Activated B cell treated with CpG ODN at 0.5 μM for 24 hours (primary cell): ENCODE measurements at regions of chr11 and their contacts with region 1.

Region 1: GRCh38 chr11:46845740-46846509 is at the start of gene CKAP5:
- DNase-seq: peak; percentile 77
- ATAC-seq: peak; percentile 88
- H3K4me3 Mint-ChIP-seq: peak within 1 kb of the TSS; percentile 96
- H3K27ac Mint-ChIP-seq: peak within 1 kb of the TSS; percentile 88
- H3K4me1 Mint-ChIP-seq: peaks cover 33% of the 10 kb centered on the region
- H3K27me3 Mint-ChIP-seq: no peaks in the 10 kb centered on the region
- CTCF ChIP-seq: no peak
- total RNA-seq, gene CKAP5: 50.4 and 52.9 TPM in 2 replicates

Region 2: DNA sequence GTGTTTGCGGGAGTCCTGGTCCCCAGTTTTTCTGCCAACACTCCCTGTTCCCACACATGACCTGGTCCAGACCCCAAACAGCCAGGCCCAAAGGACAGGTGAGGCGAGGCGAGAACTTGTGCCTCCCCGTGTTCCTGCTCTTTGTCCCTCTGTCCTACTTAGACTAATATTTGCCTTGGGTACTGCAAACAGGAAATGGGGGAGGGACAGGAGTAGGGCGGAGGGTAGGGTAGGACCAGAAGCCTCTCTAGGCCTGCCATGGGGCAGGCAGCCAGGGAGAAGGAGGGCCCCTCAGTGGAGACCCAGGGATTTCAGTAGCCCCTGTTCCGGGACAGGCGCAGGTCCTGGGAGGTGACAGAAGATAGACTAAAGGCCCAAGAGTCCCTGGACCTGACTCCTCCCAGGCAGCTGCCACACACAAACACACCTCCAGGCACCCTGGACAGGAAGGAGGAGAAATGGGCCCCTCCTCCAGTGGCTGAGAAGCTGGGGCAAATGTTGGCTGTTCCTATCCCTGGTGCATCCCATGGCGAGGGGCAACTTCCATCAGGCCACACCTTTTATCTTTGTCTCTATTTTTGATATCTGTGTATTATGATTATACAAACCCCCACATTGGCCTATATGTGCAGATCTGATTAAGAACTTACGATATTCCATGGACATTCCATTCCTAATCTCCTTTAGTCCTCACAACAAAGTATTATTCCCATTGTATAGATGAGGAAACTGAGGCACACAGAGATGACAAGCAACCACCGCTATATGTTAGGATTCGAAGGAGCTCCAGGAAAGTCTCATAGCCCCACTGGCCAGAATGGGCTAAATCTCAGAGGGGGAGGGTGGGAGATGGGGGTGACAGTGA is 127.5 kb before region 1 on chr11:
- CTCF ChIA-PET with region 1: no interaction called
- POLR2A ChIA-PET with region 1: no interaction called
- intact Hi-C with region 1: no loop called
- DNase-seq: no peak
- ATAC-seq: no peak
- H3K4me3 Mint-ChIP-seq: no peak overlapping the region
- H3K27ac Mint-ChIP-seq: no peak overlapping the region
- H3K4me1 Mint-ChIP-seq: no peaks in the 10 kb centered on the region
- H3K27me3 Mint-ChIP-seq: peaks cover 3% of the 10 kb centered on the region
- CTCF ChIP-seq: no peak

Region 3: GRCh38 chr11:46808799-46809431 is 37.0 kb before region 1 on chr11:
- CTCF ChIA-PET with region 1: no interaction called
- POLR2A ChIA-PET with region 1: no interaction called
- intact Hi-C with region 1: no loop called
- DNase-seq: no peak
- ATAC-seq: no peak
- H3K4me3 Mint-ChIP-seq: no peak overlapping the region
- H3K27ac Mint-ChIP-seq: no peak overlapping the region
- H3K4me1 Mint-ChIP-seq: no peaks in the 10 kb centered on the region
- H3K27me3 Mint-ChIP-seq: no peaks in the 10 kb centered on the region
- CTCF ChIP-seq: no peak

Region 4: GRCh38 chr11:46826310-46827044 is 19.4 kb before region 1 on chr11:
- CTCF ChIA-PET with region 1: no interaction called
- POLR2A ChIA-PET with region 1: interaction called, 4 read pairs
- intact Hi-C with region 1: loop called (anchors 1 kb)
- DNase-seq: peak; percentile 66
- ATAC-seq: peak; percentile 100
- H3K4me3 Mint-ChIP-seq: peak overlapping the region; percentile 82
- H3K27ac Mint-ChIP-seq: peak overlapping the region; percentile 41
- H3K4me1 Mint-ChIP-seq: peaks cover 19% of the 10 kb centered on the region
- H3K27me3 Mint-ChIP-seq: no peaks in the 10 kb centered on the region
- CTCF ChIP-seq: no peak

Region 5: DNA sequence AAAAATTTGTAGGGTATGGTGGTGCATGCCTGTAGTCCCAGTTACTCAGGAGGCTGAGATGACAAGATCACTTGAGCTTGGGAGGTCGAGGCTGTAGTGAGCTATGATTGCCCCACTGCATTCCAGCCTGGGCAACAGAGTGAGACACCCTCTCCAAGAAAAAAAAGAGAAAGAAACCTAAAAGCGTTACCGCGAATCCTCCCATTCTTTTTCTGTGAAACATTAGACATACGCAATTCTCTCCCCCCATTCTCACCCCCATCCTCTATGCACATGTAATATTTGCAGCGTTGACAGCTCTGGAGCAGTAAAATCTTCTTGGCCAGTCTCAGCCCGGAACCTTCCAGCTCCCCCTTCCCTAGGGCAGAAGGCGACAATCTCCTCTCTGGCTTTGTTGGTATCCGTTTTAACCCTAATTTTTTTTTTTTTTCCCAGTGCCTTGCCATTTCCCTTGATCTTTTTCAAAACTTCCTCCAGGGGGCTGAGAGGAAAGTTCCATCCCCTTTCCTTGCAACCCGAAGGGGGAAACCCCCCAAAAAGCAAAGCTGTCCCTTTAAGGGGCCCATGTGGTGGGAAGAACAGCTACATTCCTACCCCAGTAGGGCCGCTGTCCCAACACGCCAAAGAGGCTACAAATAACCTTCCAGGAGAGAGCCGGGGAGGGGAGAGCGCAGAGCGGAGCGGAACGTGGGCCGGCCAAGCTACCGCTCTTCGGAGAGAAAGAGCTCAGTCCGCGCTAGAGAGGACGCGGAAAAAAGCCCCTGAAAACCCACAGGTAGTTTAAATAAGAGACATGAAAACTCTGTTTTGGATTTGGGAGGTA is 70.6 kb after region 1 on chr11:
- CTCF ChIA-PET with region 1: no interaction called
- POLR2A ChIA-PET with region 1: no interaction called
- intact Hi-C with region 1: loop called (anchors 5 kb)
- DNase-seq: no peak
- ATAC-seq: peak; percentile 19
- H3K4me3 Mint-ChIP-seq: peak overlapping the region; percentile 76
- H3K27ac Mint-ChIP-seq: no peak overlapping the region
- H3K4me1 Mint-ChIP-seq: peaks cover 29% of the 10 kb centered on the region
- H3K27me3 Mint-ChIP-seq: peaks cover 62% of the 10 kb centered on the region
- CTCF ChIP-seq: no peak